IMR-90 (cell line): ENCODE measurements at regions of chr12 and their contacts with region 1.

Region 1: DNA sequence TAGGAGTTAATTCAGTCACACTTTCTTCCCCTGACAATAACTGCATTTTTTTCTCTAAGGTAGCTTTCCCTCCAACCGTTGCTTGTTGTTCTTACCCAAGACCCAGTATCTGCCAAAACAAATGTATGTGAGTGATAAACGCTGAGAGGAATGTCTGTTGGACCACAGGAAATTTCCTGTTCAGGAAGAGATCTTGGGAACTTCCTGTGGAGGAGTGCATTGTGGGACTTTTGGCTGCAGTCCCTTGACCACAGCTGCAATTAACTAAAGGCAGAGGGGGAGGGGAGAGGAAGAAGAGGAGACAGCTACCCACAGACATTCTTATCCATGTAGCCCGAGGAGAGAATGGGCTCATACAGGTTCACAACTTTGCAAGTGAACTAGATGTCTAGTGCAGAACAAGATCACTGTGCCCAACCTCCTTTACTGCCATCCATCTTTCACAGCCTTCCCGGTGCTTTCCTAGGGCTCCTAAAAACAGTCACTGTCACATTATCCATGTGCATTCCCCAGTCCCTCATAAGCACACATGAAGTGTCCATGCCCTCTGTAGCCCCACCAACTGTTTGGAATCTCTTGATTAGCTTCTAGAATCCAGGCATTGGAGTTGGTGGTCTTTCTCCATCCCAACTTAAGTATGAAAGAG is 149.5 kb downstream of the ETV6 start:
- DNase-seq: peak; percentile 88
- ATAC-seq: no peak
- H3K4me3 ChIP-seq: no peak overlapping the region
- H3K27ac ChIP-seq: peak overlapping the region; percentile 96
- H3K4me1 ChIP-seq: peaks cover 33% of the 10 kb centered on the region
- H3K27me3 ChIP-seq: no peaks in the 10 kb centered on the region
- CTCF ChIP-seq: no peak
- POLR2A ChIP-seq: no peak
- RAD21 ChIP-seq: no peak

Region 2: GRCh38 chr12:11719678-11720099 is 79.3 kb before region 1 on chr12:
- CTCF ChIA-PET with region 1: interaction called, 3 read pairs
- POLR2A ChIA-PET with region 1: no interaction called
- dilution Hi-C with region 1: no loop called
- in situ Hi-C with region 1: no loop called
- intact Hi-C with region 1: loop called (anchors 2 kb)
- DNase-seq: peak; percentile 98
- ATAC-seq: peak; percentile 91
- H3K4me3 ChIP-seq: no peak overlapping the region
- H3K27ac ChIP-seq: peak overlapping the region; percentile 96
- H3K4me1 ChIP-seq: peaks cover 32% of the 10 kb centered on the region
- H3K27me3 ChIP-seq: no peaks in the 10 kb centered on the region
- CTCF ChIP-seq: no peak
- POLR2A ChIP-seq: peak; percentile 87
- RAD21 ChIP-seq: peak; percentile 27

Region 3: GRCh38 chr12:11765817-11766794 is 32.9 kb before region 1 on chr12:
- CTCF ChIA-PET with region 1: no interaction called
- POLR2A ChIA-PET with region 1: no interaction called
- dilution Hi-C with region 1: no loop called
- in situ Hi-C with region 1: no loop called
- intact Hi-C with region 1: loop called (anchors 1 kb)
- DNase-seq: peak; percentile 70
- ATAC-seq: peak; percentile 57
- H3K4me3 ChIP-seq: no peak overlapping the region
- H3K27ac ChIP-seq: peak overlapping the region; percentile 94
- H3K4me1 ChIP-seq: peaks cover 38% of the 10 kb centered on the region
- H3K27me3 ChIP-seq: no peaks in the 10 kb centered on the region
- CTCF ChIP-seq: no peak
- POLR2A ChIP-seq: no peak
- RAD21 ChIP-seq: no peak

Region 4: DNA sequence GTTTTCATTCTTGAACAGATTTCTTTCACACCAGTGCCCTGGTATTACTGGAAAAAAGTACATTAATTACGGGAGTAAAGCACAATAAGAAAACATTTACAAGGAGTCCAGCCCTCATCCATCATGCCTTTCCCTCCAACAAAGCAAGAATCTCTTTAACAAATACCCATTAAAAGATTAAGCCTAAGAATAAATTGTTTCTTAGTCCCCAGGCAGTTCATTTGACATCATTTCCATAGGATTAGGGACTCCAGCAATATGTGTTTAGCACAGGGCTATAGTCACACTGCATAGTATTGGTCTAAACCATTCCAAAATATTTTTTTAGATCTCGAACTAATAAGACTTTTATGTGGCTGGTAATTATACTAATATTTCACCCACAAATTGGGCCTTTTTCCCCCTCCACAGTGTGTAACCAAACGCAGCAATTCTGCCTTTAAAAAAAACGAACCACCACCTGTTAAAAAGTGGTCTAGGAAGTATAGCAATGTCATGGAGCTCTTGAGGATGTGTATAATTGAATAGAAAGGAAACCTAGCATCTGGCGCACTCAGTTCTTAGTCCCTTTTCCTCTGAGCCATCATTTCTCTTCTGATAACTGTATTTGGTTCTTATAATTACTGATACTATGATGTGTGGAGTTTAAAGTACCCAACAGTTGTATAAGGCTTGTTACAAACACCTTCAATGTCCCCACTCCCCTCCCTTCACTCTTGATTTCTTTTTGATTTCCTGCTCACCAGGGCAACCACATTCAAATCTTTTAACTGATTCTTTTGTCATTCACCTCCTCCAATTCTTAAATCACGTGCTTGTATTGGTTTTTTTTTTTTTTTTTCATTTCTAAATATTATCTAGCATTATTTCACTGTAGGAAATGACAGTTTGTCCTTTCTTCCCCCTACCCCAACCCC is 10.8 kb before region 1 on chr12:
- CTCF ChIA-PET with region 1: interaction called, 7 read pairs
- POLR2A ChIA-PET with region 1: interaction called, 15 read pairs
- dilution Hi-C with region 1: no loop called
- in situ Hi-C with region 1: no loop called
- intact Hi-C with region 1: no loop called
- DNase-seq: no peak
- ATAC-seq: no peak
- H3K4me3 ChIP-seq: no peak overlapping the region
- H3K27ac ChIP-seq: no peak overlapping the region
- H3K4me1 ChIP-seq: peaks cover 2% of the 10 kb centered on the region
- H3K27me3 ChIP-seq: no peaks in the 10 kb centered on the region
- CTCF ChIP-seq: no peak
- POLR2A ChIP-seq: no peak
- RAD21 ChIP-seq: no peak

Region 5: DNA sequence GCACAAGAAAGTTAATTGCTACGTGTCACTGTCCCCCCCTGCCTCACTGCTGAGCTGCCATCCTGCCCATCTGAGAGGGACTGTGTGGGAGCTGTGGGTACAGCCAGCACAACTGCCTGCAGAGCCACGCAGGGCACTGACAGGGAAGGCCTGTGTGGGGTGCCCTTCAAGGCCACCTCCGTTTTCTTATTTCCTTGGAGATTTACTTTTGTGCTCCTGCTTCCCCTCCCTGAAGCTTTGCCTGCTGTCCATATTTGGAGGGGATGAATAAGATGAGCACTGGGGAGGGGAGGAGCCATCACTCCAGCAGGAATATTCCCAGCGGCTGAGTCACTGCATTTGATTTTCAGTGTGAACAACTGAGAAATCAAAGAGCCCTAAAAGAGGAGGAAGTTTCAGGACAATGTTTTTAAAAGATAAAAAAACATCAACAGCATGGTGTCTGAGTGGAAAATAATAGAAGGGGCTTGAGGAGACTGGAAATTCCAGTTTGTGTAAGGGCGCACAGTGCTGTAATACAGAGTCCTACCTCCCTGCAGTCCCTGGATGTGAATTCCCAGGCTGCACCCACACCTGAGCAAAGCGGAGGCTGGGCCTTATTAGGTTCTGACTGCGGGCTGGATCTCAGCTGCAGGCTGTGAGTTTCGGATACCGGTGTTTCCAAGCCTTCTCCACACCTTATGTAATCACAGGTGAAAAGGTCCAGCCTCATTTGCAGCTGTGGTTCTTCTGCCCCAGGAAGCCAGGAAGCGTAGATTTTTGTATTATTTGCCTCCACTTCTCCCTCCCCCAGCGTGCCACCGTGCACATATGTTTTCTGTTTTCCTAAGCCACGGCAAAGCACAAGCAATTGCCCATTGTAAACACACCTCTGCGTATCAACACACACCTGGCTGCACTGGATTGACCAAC is 79.1 kb after region 1 on chr12:
- CTCF ChIA-PET with region 1: no interaction called
- POLR2A ChIA-PET with region 1: no interaction called
- dilution Hi-C with region 1: no loop called
- in situ Hi-C with region 1: no loop called
- intact Hi-C with region 1: no loop called
- DNase-seq: peak; percentile 80
- ATAC-seq: peak; percentile 99
- H3K4me3 ChIP-seq: no peak overlapping the region
- H3K27ac ChIP-seq: peak overlapping the region; percentile 63
- H3K4me1 ChIP-seq: peaks cover 7% of the 10 kb centered on the region
- H3K27me3 ChIP-seq: no peaks in the 10 kb centered on the region
- CTCF ChIP-seq: no peak
- POLR2A ChIP-seq: no peak
- RAD21 ChIP-seq: no peak

Region 6: DNA sequence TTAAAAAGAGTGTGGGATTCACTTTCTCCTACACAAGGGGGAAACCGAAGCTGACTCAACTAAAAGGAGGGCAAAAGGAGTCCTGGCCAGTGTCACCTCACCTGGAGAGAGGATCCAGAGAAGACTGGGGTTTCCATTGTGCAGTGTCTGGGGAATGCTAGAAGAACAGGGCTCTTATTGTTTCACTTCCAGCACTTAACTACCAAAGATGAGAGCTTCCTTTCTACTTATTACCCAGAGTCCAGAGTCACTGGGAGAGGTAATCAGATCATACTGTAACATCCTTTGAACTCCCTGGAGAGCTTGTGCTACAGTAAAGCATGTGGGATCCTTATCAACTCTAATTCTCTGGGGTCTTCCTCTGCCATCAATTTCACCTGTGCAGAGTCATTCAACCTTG is 123.4 kb after region 1 on chr12:
- CTCF ChIA-PET with region 1: no interaction called
- POLR2A ChIA-PET with region 1: no interaction called
- dilution Hi-C with region 1: no loop called
- in situ Hi-C with region 1: no loop called
- intact Hi-C with region 1: no loop called
- DNase-seq: no peak
- ATAC-seq: no peak
- H3K4me3 ChIP-seq: no peak overlapping the region
- H3K27ac ChIP-seq: no peak overlapping the region
- H3K4me1 ChIP-seq: no peaks in the 10 kb centered on the region
- H3K27me3 ChIP-seq: peaks cover 34% of the 10 kb centered on the region
- CTCF ChIP-seq: no peak
- POLR2A ChIP-seq: no peak
- RAD21 ChIP-seq: no peak